ENCODE measurements at regions of chr2 and their contacts with region 1.

Region 1: DNA sequence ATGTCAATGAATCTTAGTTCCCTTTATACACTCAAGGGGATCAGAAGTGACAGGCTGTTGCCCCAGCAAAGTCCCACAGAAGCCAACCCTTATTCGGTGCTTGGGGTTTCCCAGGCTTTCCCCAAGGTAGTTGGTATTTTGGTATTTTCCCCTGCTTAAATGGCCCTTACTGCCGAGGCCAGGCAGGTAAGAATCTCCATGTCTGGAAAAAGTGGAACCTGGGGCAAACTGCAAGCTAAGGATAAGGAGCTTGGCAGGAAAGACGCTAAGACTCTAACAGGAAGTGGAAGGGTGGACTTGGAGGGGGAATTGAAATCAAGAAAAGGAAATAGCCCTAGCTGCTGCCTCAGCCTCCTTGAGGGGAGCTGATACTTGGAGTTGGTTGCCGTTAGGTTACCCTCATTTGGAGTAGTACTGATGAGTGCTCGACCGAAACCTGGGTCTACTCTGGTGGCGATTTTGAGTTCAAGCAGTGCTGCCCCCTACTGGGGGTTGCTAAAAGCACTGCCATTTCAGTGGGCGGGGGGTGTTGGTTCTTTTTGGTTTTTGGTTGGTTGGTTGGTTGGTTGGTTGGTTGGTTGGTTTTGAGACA is 3.3 kb upstream of the GPBAR1 start:
- DNase-seq: peak; percentile 54 to 71 (median 62)
- H3K4me3 ChIP-seq: no peak overlapping the region
- H3K4me3 Mint-ChIP-seq: peak overlapping the region; percentile 10 to 84 (median 49)
- H3K27ac ChIP-seq: peak overlapping the region; percentile 12
- H3K27ac Mint-ChIP-seq: peak overlapping the region; percentile 43 to 93 (median 90)
- H3K4me1 ChIP-seq: peaks cover 10% of the 10 kb centered on the region
- H3K4me1 Mint-ChIP-seq: peaks cover 10 to 26% (median 15%) of the 10 kb centered on the region in 3 donors
- H3K27me3 ChIP-seq: no peaks in the 10 kb centered on the region
- H3K27me3 Mint-ChIP-seq: no peaks in the 10 kb centered on the region

Region 2: DNA sequence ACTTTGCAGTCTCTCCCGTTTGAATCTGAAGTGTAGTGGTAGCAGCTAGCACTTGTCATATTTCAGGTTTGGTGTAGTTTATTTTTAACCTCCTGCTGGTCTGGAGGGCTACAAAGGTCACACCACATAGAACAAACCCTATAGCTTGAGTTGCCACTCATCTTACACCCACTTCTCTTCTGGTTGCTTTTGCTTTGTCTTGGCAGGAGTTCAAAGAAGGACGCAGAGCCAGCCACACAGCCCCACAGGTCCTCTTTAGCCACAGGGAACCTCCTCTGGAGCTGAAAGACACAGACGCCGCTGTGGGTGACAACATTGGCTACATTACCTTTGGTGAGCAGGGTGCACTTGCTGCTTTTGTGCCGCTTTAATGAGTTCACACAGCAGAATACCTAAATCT is 12.3 kb before region 1 on chr2:
- CTCF ChIA-PET with region 1: interaction called, 14 read pairs
- POLR2A ChIA-PET with region 1: no interaction called
- DNase-seq: no peak
- H3K4me3 ChIP-seq: no peak overlapping the region
- H3K4me3 Mint-ChIP-seq: no peak overlapping the region
- H3K27ac ChIP-seq: no peak overlapping the region
- H3K27ac Mint-ChIP-seq: peak overlapping the region in 7 of 8 donors; percentile 18 to 91 (median 66)
- H3K4me1 ChIP-seq: peaks cover 11% of the 10 kb centered on the region
- H3K4me1 Mint-ChIP-seq: peaks cover 22 to 44% (median 41%) of the 10 kb centered on the region in 3 donors
- H3K27me3 ChIP-seq: no peaks in the 10 kb centered on the region
- H3K27me3 Mint-ChIP-seq: no peaks in the 10 kb centered on the region

Measured in CD8-positive, alpha-beta memory T cell (primary cell).